ENCODE measurements at regions of chr19 and their contacts with region 1.

Region 1: GRCh38 chr19:2050991-2051772 is at the start of gene MKNK2:
- DNase-seq: peak; percentile 71 to 97 (median 91)
- ATAC-seq: peak; percentile 73 to 89 (median 86)
- H3K4me3 ChIP-seq: peak within 1 kb of the TSS; percentile 96 to 99
- H3K4me3 Mint-ChIP-seq: peak within 1 kb of the TSS; percentile 78 to 87 (median 81)
- H3K27ac ChIP-seq: peak within 1 kb of the TSS; percentile 96
- H3K27ac Mint-ChIP-seq: peak within 1 kb of the TSS; percentile 92 to 95
- H3K4me1 ChIP-seq: peaks cover 45 to 83% of the 10 kb centered on the region in 2 experiments
- H3K4me1 Mint-ChIP-seq: peaks cover 51 to 66% (median 58%) of the 10 kb centered on the region in 3 donors
- H3K27me3 ChIP-seq: no peaks in the 10 kb centered on the region
- H3K27me3 Mint-ChIP-seq: no peaks in the 10 kb centered on the region
- total RNA-seq, gene MKNK2: 196 to 242 (median 234) TPM

Region 2: GRCh38 chr19:2151339-2152229 is 100.4 kb after region 1 on chr19 and contains the start of gene AP3D1:
- CTCF ChIA-PET with region 1: no interaction called
- POLR2A ChIA-PET with region 1: interaction called in 1 of 2 experiments, 11 read pairs
- DNase-seq: peak; percentile 99 to 100 (median 100)
- ATAC-seq: peak; percentile 87 to 92 (median 90)
- H3K4me3 ChIP-seq: peak within 1 kb of the TSS; percentile 69 to 79
- H3K4me3 Mint-ChIP-seq: peak within 1 kb of the TSS; percentile 71 to 82 (median 80)
- H3K27ac ChIP-seq: peak within 1 kb of the TSS; percentile 62
- H3K27ac Mint-ChIP-seq: peak within 1 kb of the TSS; percentile 70 to 72
- H3K4me1 ChIP-seq: peaks cover 10 to 42% of the 10 kb centered on the region in 2 experiments
- H3K4me1 Mint-ChIP-seq: peaks cover 39 to 41% (median 41%) of the 10 kb centered on the region in 3 donors
- H3K27me3 ChIP-seq: no peaks in the 10 kb centered on the region
- H3K27me3 Mint-ChIP-seq: no peaks in the 10 kb centered on the region
- total RNA-seq, gene AP3D1: 78.6 to 91.5 (median 86.7) TPM